A549 (cell line): ENCODE measurements at regions of chr2 and their contacts with region 1.

Region 1: DNA sequence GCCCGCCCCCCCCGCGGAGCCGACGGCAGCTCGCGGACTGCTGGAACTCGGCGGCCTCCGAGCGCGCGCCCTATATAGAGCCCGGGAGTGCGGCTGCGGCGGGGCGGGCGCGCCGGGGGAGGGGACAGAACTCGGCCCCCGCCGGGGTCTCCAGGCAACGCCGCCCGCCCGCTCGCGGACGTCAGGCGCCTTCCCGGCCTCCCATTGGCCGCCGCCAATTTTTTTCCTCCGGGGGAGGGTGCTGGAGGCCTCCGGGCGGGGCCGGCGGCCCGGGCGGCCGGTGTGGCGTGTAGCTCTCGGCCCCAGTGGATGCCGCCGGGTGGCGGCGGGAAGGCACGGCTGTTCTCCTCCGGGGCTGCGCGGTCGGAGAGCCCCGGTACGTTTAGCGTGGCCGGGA is at the start of gene ZFP36L2:
- DNase-seq: peak; percentile 96 to 97
- ATAC-seq: peak; percentile 58 to 78
- H3K4me3 ChIP-seq: peak within 1 kb of the TSS; percentile 86
- H3K27ac ChIP-seq: peak within 1 kb of the TSS; percentile 89 to 98
- H3K4me1 ChIP-seq: peaks cover 40% of the 10 kb centered on the region
- CTCF ChIP-seq: no peak
- EP300 ChIP-seq: no peak
- POLR2A ChIP-seq: peak; percentile 84
- RAD21 ChIP-seq: no peak; a peak in 1 of 5 replicates
- polyA plus RNA-seq, gene ZFP36L2: 10.5 and 14.9 TPM in 2 replicates

Region 2: DNA sequence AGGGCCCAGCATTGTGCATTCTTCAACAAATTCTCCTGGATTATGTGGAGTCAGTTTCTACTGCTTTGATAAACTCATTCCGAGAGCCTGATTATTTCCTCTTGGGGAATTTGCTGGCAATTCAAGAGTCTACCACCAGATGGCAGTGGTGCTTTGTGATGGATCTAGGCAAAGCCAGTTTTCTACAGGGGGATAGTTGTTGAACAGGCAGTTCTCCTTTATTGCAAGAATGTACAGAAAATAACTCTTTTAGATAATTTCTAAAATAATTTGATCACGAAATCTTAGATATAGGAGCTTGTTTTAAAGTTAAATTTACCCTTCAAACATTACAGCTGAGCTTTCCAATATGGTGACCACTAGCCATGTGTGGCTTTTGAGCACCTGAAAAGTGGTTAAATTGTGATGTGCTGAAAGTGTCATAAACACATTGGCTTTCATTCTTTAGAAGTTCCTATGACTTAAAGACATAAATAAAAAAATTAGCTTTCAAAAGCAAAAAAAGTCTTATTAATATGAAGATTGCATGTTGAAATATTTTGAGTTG is 367.5 kb before region 1 on chr2:
- CTCF ChIA-PET with region 1: interaction called, 36 read pairs
- POLR2A ChIA-PET with region 1: no interaction called
- DNase-seq: peak; percentile 61 to 76
- ATAC-seq: peak in 1 of 2 experiments; percentile 74; a peak in 3 of 6 replicates
- H3K4me3 ChIP-seq: no peak overlapping the region
- H3K27ac ChIP-seq: no peak overlapping the region
- H3K4me1 ChIP-seq: no peaks in the 10 kb centered on the region
- CTCF ChIP-seq: peak; percentile 98
- EP300 ChIP-seq: no peak
- POLR2A ChIP-seq: no peak
- RAD21 ChIP-seq: peak; percentile 95 to 97

Region 3: GRCh38 chr2:42964439-42965083 is 262.0 kb before region 1 on chr2:
- CTCF ChIA-PET with region 1: interaction called, 253 read pairs
- POLR2A ChIA-PET with region 1: interaction called, 6 read pairs
- DNase-seq: no peak
- ATAC-seq: no peak
- H3K4me3 ChIP-seq: no peak overlapping the region
- H3K27ac ChIP-seq: no peak overlapping the region
- H3K4me1 ChIP-seq: peaks cover 3% of the 10 kb centered on the region; the same call in 2 of the 3 replicates
- CTCF ChIP-seq: no peak
- EP300 ChIP-seq: no peak
- POLR2A ChIP-seq: no peak
- RAD21 ChIP-seq: no peak

Region 4: GRCh38 chr2:43024515-43025011 is 202.0 kb before region 1 on chr2:
- CTCF ChIA-PET with region 1: interaction called, 85 read pairs
- POLR2A ChIA-PET with region 1: interaction called, 5 read pairs
- DNase-seq: peak; percentile 57 to 78
- ATAC-seq: peak; percentile 81 to 89
- H3K4me3 ChIP-seq: no peak overlapping the region
- H3K27ac ChIP-seq: peak overlapping the region; percentile 23 to 48; a peak in 4 of 6 replicates
- H3K4me1 ChIP-seq: peaks cover 3% of the 10 kb centered on the region; the same call in 1 of the 3 replicates
- CTCF ChIP-seq: peak; percentile 79
- EP300 ChIP-seq: no peak
- POLR2A ChIP-seq: no peak
- RAD21 ChIP-seq: peak; percentile 88 to 92

Region 5: GRCh38 chr2:43188561-43189386 is 37.8 kb before region 1 on chr2:
- CTCF ChIA-PET with region 1: interaction called, 10 read pairs
- POLR2A ChIA-PET with region 1: interaction called, 5 read pairs
- DNase-seq: no peak
- ATAC-seq: no peak
- H3K4me3 ChIP-seq: no peak overlapping the region
- H3K27ac ChIP-seq: peak overlapping the region in 1 of 2 experiments; percentile 13; a peak in 1 of 6 replicates
- H3K4me1 ChIP-seq: peaks cover 43% of the 10 kb centered on the region
- CTCF ChIP-seq: no peak
- EP300 ChIP-seq: no peak
- POLR2A ChIP-seq: no peak
- RAD21 ChIP-seq: no peak

Region 6: DNA sequence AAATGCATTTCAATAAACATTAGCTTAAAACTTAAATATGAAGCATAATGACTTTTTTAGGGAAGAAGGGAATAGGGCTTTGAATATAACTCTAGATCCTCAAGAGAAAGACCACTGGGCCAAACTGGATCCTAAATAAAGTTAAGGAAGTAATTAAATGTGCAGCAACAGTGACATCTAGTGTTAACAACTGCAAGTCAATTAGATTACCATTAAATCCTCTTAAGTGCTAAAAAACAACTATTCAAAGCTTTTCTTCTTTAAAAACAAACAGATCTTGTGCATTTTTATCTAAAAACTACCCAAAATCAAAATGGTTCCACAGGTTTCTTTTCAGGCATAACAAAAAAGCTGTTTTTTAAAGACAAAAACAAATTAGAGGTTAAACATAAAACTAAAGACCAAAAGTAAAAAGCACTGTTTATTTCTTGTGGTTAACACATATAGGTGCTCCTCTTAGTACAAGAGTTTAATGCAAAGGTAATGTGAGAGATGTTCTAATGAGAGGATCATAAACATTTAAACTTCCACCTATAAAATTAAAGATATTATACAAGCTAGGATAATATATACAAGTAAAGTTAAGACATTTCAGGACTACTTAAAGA is 257.9 kb after region 1 on chr2:
- CTCF ChIA-PET with region 1: interaction called, 74 read pairs
- POLR2A ChIA-PET with region 1: interaction called, 11 read pairs
- DNase-seq: peak; percentile 15 to 85
- ATAC-seq: peak in 1 of 2 experiments; percentile 80; a peak in 3 of 6 replicates
- H3K4me3 ChIP-seq: no peak overlapping the region
- H3K27ac ChIP-seq: peak overlapping the region in 1 of 2 experiments; percentile 46; a peak in 2 of 6 replicates
- H3K4me1 ChIP-seq: peaks cover 22% of the 10 kb centered on the region
- CTCF ChIP-seq: peak; percentile 96
- EP300 ChIP-seq: no peak
- POLR2A ChIP-seq: no peak
- RAD21 ChIP-seq: peak; percentile 87 to 97